Activated naive CD4-positive, alpha-beta T cell treated with anti-CD3 and anti-CD28 coated beads for 36 hours (primary cell): ENCODE measurements at regions of chr1 and their contacts with region 1.

Region 1: GRCh38 chr1:173867753-173868265 is at the start of gene GAS5:
- DNase-seq: peak; percentile 100
- H3K4me3 Mint-ChIP-seq: peak within 1 kb of the TSS; percentile 94
- H3K27ac Mint-ChIP-seq: peak within 1 kb of the TSS; percentile 98
- H3K4me1 Mint-ChIP-seq: peaks cover 51% of the 10 kb centered on the region
- H3K27me3 Mint-ChIP-seq: no peaks in the 10 kb centered on the region
- total RNA-seq, gene GAS5: 1,367 to 1,374 TPM

Region 2: GRCh38 chr1:173420330-173420806 is 447.4 kb before region 1 on chr1:
- CTCF ChIA-PET with region 1: interaction called, 3 read pairs
- intact Hi-C with region 1: loop called (anchors 1 kb)
- DNase-seq: peak; percentile 75
- H3K4me3 Mint-ChIP-seq: no peak overlapping the region
- H3K27ac Mint-ChIP-seq: no peak overlapping the region
- H3K4me1 Mint-ChIP-seq: peaks cover 2% of the 10 kb centered on the region
- H3K27me3 Mint-ChIP-seq: no peaks in the 10 kb centered on the region

Region 3: GRCh38 chr1:173476664-173477285 is 391.0 kb before region 1 on chr1:
- CTCF ChIA-PET with region 1: no interaction called
- intact Hi-C with region 1: loop called (anchors 1 kb)
- DNase-seq: peak; percentile 86
- H3K4me3 Mint-ChIP-seq: peak overlapping the region; percentile 91
- H3K27ac Mint-ChIP-seq: peak overlapping the region; percentile 93
- H3K4me1 Mint-ChIP-seq: peaks cover 58% of the 10 kb centered on the region
- H3K27me3 Mint-ChIP-seq: no peaks in the 10 kb centered on the region

Region 4: GRCh38 chr1:173824331-173825081 is 43.3 kb before region 1 on chr1 and contains the starts of genes CENPL and DARS2:
- CTCF ChIA-PET with region 1: interaction called, 4 read pairs
- intact Hi-C with region 1: loop called (anchors 1 kb)
- DNase-seq: peak; percentile 95
- H3K4me3 Mint-ChIP-seq: peak within 1 kb of the TSS; percentile 93
- H3K27ac Mint-ChIP-seq: peak within 1 kb of the TSS; percentile 98
- H3K4me1 Mint-ChIP-seq: peaks cover 46% of the 10 kb centered on the region
- H3K27me3 Mint-ChIP-seq: no peaks in the 10 kb centered on the region
- total RNA-seq, gene CENPL: 31.1 to 31.9 TPM
- total RNA-seq, gene DARS2: 42.7 to 44.1 TPM

Region 5: GRCh38 chr1:173937062-173937461 is 69.3 kb after region 1 on chr1:
- CTCF ChIA-PET with region 1: no interaction called
- intact Hi-C with region 1: no loop called
- DNase-seq: no peak
- H3K4me3 Mint-ChIP-seq: no peak overlapping the region
- H3K27ac Mint-ChIP-seq: no peak overlapping the region
- H3K4me1 Mint-ChIP-seq: peaks cover 6% of the 10 kb centered on the region
- H3K27me3 Mint-ChIP-seq: no peaks in the 10 kb centered on the region

Region 6: DNA sequence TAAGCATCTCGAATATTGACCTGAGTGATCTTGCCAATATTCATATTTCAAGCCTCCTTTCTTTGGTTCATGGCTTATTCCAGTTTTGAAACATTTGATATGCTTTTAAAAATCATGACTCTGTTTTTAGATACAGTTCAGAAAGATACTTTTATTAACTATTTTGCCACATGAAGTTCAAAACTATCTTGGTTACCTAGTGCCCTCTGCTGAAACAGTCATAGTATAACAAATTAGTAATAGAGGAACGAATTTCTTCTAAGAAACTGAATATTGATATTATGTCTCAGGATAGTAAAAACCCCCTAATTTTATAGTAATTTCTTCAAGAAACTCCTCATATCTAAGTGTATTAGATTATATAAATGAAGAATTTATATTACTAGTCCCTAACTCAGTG is 206.9 kb after region 1 on chr1:
- CTCF ChIA-PET with region 1: no interaction called
- intact Hi-C with region 1: loop called (anchors 5 kb)
- DNase-seq: no peak
- H3K4me3 Mint-ChIP-seq: no peak overlapping the region
- H3K27ac Mint-ChIP-seq: no peak overlapping the region
- H3K4me1 Mint-ChIP-seq: no peaks in the 10 kb centered on the region
- H3K27me3 Mint-ChIP-seq: no peaks in the 10 kb centered on the region

Region 7: GRCh38 chr1:174204697-174205308 is 337.0 kb after region 1 on chr1:
- CTCF ChIA-PET with region 1: no interaction called
- intact Hi-C with region 1: loop called (anchors 1 kb)
- DNase-seq: peak; percentile 25
- H3K4me3 Mint-ChIP-seq: no peak overlapping the region
- H3K27ac Mint-ChIP-seq: peak overlapping the region; percentile 55
- H3K4me1 Mint-ChIP-seq: peaks cover 48% of the 10 kb centered on the region
- H3K27me3 Mint-ChIP-seq: no peaks in the 10 kb centered on the region

Region 8: DNA sequence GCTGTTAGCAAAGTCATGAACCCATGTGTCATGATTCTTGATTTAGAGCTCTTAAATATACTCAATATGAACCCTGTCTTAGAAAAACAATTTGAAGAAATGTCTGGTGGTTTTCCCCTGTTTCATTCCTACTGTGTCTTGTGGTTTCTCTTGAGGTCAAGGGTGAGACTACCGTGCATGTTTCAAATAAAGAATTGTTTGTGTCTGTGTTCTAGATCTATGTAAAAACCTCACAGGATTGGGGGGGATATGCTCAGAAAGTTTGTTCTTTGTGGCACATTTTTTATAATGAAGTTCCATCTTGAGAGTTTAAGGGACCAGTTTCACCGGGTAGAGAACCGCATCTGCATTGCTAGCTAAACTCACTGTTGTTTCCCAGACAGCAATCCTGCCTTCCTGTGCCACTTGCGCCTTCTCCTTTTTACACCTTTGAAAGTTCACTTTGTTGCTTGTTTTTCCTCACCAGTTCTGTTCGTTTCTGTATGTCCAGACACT is 1101.0 kb after region 1 on chr1:
- CTCF ChIA-PET with region 1: no interaction called
- intact Hi-C with region 1: loop called (anchors 1 kb)
- DNase-seq: peak; percentile 49
- H3K4me3 Mint-ChIP-seq: peak overlapping the region; percentile 51
- H3K27ac Mint-ChIP-seq: peak overlapping the region; percentile 86
- H3K4me1 Mint-ChIP-seq: peaks cover 63% of the 10 kb centered on the region
- H3K27me3 Mint-ChIP-seq: no peaks in the 10 kb centered on the region